ENCODE measurements at regions of chr18 and their contacts with region 1.

Region 1: DNA sequence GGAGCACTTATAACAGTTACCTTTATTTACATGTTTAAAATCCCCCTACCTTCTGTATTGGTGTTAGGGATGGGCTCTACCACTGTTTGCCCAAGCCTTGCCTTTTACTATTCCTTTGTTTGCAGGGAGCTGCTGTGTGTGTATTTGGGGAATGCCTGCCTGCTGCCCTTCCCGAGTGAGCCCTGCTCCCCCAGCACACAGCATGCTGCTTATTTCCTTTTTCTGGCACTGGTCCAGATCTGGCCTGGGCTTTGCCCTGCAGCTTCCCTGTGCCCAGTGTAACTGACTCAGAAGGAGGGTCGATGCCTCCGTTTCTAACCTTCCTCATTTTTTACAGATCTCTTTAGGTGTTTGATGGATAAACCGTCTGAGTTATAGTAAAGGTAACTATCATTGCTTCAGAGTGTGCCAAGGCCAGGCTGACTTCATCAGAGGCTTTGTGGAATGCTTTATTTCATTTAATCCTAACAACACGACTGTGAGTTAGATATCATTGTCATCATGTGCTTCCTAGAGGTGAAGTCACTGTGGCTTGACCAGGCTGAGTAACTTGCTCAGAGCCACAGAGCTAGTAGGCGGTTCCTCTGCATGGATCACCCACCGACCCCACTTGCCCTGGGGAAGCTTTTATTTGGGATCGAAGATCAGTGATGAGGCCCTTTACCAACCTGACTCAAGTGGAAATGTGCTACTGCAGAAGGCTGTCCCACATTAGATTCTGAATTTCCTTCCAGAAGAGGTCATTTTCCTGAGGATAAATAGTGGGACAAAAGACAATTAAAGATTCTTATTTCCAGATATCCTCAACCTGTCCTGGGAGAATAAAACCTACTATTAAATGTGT is 238.8 kb downstream of the ZNF407 start:
- DNase-seq: peak; percentile 77

Region 2: DNA sequence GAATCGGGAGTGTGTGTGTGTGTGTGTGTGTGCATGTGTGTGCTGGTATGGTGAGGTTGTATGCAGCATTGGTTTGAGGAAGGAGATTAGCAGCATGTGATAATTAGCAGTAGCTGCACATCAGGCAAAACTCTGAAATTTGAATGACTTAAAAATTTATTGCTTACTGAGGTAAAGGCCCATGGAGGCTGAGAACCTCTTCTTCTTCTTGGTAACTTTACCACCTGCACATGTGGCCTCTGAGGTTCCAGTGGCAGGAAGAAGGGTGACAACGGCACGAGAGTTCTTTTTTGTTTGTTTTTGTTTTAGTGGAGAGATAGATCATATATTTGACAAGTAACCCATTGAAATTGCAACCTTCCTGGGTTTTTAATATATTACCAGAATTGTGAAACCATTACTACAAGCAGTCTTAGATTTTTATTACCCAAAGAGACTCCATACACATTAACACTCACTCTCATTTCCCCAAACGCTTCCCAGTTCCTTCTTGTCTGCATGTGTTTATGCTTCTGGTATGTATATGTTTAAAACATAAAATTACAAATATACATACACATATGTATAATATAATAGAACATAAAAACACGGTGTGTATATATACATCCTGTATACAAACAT is 80.4 kb after region 1 on chr18:
- in situ Hi-C with region 1: loop called (anchors 5 kb)
- DNase-seq: no peak